Aorta (tissue), 5 donors: ENCODE measurements at regions of chr12 and their contacts with region 1.

Region 1: DNA sequence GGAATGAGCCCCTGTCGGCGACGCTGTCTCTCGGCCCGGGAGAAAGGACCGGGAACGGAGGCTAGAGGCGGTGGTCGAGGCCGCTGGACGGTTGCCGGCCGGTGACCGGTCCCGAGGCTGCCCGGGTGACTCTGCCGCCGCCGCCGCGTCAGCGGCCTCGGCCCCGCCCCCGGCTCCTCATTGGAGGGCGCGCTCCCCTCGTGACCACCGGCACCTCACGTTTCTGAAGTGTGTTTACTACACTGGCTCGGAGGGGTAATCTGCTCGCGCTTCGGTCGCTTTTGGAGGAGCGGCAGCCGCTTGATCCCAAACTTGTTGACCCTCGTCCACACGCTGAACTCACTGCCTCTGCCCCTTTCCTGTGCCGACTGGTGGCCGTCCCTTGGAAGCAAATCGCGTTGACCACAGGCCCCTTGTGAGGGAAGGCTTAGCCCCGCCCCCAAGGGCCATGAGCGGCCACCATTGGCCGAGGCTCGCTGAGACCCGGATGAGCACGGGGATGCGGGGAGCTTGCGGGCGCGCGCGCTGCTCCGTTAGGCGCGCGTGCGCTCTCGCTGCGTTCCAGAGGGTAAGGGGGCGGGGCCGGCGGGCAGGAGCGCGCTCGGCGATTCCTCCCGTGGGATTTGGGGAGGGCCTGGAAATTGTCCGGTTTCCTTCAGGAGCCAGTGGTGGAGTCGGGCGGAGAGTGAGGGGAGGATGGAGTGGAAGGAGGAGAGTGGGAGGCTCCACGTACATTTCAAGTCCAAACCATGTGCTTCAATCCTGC is at the start of gene CRY1:
- DNase-seq: peak; percentile 98
- ATAC-seq: peak; percentile 96
- H3K4me3 ChIP-seq: peak within 1 kb of the TSS; percentile 58 to 61
- H3K27ac ChIP-seq: peak within 1 kb of the TSS; percentile 91 to 98
- H3K4me1 ChIP-seq: no peaks in the 10 kb centered on the region
- H3K27me3 ChIP-seq: no peaks in the 10 kb centered on the region
- total RNA-seq, gene CRY1: 22.0 to 40.6 TPM

Region 2: GRCh38 chr12:106774005-106774807 is 319.4 kb before region 1 on chr12 and contains the start of gene RIC8B:
- intact Hi-C with region 1: loop called in 1 of 2 experiments (anchors 10 kb)
- DNase-seq: peak; percentile 96 to 99
- ATAC-seq: peak; percentile 98
- H3K4me3 ChIP-seq: peak within 1 kb of the TSS; percentile 73 to 84
- H3K27ac ChIP-seq: peak within 1 kb of the TSS in 1 of 2 donors; percentile 97
- H3K4me1 ChIP-seq: peaks cover 0 to 5% of the 10 kb centered on the region in 2 donors
- H3K27me3 ChIP-seq: no peaks in the 10 kb centered on the region
- total RNA-seq, gene RIC8B: 18.1 to 21.4 TPM

Region 3: DNA sequence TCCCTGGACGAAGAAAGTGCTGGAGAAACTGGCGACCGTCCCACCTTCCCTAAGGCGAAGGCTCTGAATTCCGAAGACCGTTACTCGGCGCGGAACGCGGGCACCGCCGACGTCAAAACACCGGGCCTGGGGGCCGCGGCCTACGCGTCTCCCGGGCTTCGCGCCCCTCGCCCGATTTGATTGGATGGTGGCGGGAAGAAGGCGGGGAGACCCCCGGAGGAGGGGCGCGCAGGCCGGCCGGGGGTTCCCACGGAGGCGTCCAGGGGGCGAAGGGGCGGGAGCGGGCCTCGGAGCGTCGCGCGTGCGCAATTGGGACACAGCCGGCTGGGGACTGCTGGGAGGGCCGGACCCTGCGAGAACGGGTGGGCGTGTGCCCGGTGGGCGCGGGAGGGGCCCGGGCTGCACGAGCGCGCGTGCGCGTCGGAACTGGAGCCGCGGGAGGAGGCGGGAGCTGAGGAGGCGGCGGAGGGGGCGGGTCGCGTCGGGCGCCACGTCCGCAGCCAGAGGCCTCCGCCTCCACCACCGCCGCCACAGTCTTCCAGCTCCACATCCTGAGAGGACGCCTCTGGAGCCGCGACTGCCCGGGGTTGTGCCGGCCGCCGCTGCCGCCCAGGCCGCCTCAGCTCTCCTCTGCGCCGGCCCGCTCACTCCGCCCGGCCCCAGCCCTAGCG is 138.1 kb before region 1 on chr12 and contains the start of gene TMEM263:
- intact Hi-C with region 1: loop called (anchors 2 to 5 kb)
- DNase-seq: peak; percentile 96 to 99
- ATAC-seq: peak; percentile 96
- H3K4me3 ChIP-seq: peak within 1 kb of the TSS; percentile 74 to 95
- H3K27ac ChIP-seq: peak within 1 kb of the TSS; percentile 72 to 89
- H3K4me1 ChIP-seq: peaks cover 0 to 2% of the 10 kb centered on the region in 2 donors
- H3K27me3 ChIP-seq: no peaks in the 10 kb centered on the region
- total RNA-seq, gene TMEM263: 55.5 to 78.9 TPM

Region 4: DNA sequence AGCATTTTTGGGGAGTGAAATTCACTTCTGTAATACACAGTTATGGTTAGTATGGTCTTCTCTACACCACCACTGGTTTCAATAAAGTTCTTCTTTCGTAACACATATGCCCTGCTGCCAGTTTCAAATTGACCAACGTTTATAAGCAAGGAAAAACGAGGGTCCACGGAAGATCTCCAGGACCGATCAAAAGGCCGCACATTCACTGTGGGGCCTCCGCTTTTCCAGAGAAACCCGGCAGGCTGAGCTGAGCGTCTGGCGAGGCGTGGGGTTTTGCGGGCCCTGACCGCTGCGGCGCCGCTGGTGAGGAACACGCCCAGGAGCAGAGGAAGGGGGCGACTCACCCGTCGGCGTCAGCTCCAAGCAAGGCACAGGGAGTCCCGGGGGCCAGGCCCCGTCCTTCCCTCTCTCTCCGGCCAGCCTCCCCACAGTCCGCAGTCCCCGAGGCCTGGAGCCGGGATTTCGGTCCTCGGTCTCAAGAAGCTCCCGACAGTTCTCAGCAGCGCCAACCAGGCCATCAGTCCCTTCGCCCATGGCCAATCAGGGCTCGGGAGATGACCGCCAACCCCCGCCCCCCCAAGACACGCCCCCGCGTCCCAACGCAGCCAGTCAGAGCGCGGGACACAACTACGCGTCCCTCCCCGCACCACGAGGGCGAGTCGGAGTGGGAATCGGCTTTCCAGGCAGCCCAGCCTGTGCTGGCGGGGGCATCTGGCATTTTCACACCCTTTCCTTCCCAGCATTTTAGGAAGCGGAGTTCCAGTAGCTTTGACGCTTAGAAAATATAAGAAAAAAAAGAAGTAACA is 106.8 kb before region 1 on chr12 and contains the start of gene MTERF2:
- intact Hi-C with region 1: loop called in 1 of 2 experiments (anchors 1 kb)
- DNase-seq: peak; percentile 95 to 96
- ATAC-seq: peak; percentile 99
- H3K4me3 ChIP-seq: peak within 1 kb of the TSS; percentile 57 to 74
- H3K27ac ChIP-seq: peak within 1 kb of the TSS; percentile 36 to 97
- H3K4me1 ChIP-seq: peaks cover 0 to 2% of the 10 kb centered on the region in 2 donors
- H3K27me3 ChIP-seq: no peaks in the 10 kb centered on the region
- total RNA-seq, gene MTERF2: 8.5 to 11.0 TPM

Region 5: GRCh38 chr12:107027636-107028053 is 66.0 kb before region 1 on chr12:
- intact Hi-C with region 1: loop called in 1 of 2 experiments (anchors 5 kb)
- DNase-seq: no peak
- ATAC-seq: peak; percentile 94
- H3K4me3 ChIP-seq: no peak overlapping the region
- H3K27ac ChIP-seq: no peak overlapping the region
- H3K4me1 ChIP-seq: peaks cover 0 to 2% of the 10 kb centered on the region in 2 donors
- H3K27me3 ChIP-seq: no peaks in the 10 kb centered on the region